PC-3 (cell line): ENCODE measurements at regions of chr12 and their contacts with region 1.

Region 1: DNA sequence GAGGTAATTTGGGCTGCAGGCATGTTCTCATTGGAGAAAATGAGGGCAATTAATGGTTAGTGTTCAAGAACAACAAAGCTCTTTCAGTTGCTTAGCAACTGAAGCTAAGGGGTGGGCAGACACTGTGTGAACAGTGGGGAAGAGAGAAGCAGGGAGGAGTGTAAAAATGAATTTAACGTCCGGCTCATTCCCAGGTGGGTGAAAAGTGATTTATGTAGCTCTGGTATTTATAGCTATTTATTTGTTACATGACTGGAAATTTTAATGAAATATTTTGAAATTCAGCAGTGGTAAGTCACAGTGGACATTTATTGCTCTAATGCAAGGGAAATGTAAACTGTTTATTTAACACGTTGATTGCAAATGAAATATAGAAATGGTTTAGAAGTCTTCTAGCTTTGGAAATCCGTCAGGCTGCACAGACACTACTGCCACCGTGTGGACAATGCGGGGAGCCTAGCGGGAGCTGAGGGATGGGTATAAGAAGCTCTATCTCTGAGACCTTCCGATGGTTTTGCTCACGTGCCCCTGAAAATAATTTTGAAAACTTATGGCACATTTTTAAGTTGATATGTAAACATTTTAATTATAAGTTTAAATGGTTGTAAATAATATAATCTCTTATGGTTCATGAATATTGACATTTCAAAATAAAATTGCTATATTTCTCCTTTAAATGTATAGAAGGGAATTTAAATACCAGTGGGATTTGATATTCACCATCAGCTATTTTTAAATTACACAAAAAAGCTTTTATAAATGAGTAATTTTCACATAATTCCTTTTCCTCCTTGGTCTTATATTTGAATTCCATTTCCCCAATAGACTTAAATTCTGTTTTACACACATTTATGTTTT is 54.4 kb downstream of the E2F7 start:
- DNase-seq: peak; percentile 78
- ATAC-seq: peak; percentile 90
- H3K4me3 ChIP-seq: no peak overlapping the region
- H3K27ac ChIP-seq: no peak overlapping the region
- H3K4me1 ChIP-seq: no peaks in the 10 kb centered on the region
- H3K27me3 ChIP-seq: no peaks in the 10 kb centered on the region
- CTCF ChIP-seq: peak; percentile 96

Region 2: DNA sequence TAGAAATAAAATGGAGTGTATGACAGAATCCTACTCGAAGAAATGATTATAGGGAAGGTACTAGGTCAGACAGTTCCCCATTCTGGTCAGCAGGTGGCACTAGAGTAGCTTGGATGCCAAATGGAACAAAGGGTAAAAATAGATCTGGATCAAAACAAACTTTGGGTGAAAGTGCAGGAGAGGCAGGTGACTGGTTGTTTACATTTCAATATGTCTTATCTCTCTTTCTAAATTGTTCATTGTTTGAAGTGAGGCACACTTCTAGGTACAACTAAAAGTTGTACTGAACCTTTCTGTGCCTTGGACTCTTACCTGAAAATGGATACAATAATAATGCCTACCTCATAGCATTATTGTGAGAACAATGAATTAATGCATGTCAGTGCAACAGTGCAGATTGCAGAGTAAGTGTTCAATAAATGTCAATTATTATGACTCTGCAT is 389.3 kb before region 1 on chr12:
- CTCF ChIA-PET with region 1: interaction called, 3 read pairs
- POLR2A ChIA-PET with region 1: no interaction called
- intact Hi-C with region 1: loop called (anchors 1 kb)
- DNase-seq: peak; percentile 85
- ATAC-seq: peak; percentile 52
- H3K4me3 ChIP-seq: no peak overlapping the region
- H3K27ac ChIP-seq: no peak overlapping the region
- H3K4me1 ChIP-seq: peaks cover 23% of the 10 kb centered on the region
- H3K27me3 ChIP-seq: no peaks in the 10 kb centered on the region
- CTCF ChIP-seq: peak; percentile 97

Region 3: DNA sequence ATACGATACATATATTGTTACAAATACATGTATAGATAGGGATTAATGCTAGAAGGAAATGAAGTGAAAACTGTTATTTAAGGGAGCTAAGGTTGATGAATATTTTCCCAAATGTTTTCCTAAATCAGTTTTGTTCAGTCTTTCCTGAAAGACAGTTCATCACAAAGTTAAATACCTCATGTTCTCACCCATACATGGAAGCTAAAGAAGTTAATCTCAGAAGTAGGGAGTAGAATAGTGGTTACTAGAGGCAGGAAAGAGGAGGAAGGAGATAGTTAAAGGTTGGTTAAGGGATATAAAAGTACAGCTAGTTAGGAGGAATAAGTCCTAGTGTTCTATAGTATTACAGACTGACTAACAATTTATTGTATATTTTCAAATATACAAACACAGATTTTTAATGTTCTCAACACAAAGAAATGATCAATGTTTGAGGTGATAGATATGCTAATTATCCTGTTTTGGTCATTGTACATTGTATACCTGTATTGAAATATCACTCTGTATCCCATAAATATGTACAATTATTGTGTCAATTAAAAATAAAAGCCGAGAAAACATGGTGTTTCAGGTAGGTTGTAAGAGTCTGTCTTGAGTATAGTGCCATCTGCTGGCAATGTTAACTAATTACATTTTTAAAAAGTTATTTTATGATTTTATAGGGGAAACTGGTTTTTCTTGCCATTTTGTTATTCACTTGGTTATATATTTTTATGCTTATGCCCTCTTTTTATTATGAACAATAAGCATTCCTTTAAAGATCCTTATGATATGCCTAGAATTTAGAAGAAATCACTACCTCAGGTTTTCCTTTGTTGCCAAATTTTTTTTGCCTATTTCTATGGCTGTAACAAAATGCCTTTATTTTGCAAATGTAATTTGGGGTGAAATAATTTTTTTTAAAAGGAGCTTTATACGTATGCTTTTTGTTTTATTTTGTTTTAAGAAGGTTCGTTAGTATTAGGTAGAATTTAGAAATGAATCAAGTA is 220.1 kb before region 1 on chr12:
- CTCF ChIA-PET with region 1: no interaction called
- POLR2A ChIA-PET with region 1: no interaction called
- intact Hi-C with region 1: loop called (anchors 5 kb)
- DNase-seq: peak; percentile 57
- ATAC-seq: peak; percentile 65
- H3K4me3 ChIP-seq: no peak overlapping the region
- H3K27ac ChIP-seq: no peak overlapping the region
- H3K4me1 ChIP-seq: peaks cover 5% of the 10 kb centered on the region; the same call in 1 of the 2 replicates
- H3K27me3 ChIP-seq: no peaks in the 10 kb centered on the region
- CTCF ChIP-seq: peak; percentile 74

Region 4: GRCh38 chr12:76820888-76821482 is 189.9 kb before region 1 on chr12:
- CTCF ChIA-PET with region 1: interaction called, 9 read pairs
- POLR2A ChIA-PET with region 1: no interaction called
- intact Hi-C with region 1: loop called (anchors 10 kb)
- DNase-seq: peak; percentile 58
- ATAC-seq: peak; percentile 70
- H3K4me3 ChIP-seq: no peak overlapping the region
- H3K27ac ChIP-seq: no peak overlapping the region
- H3K4me1 ChIP-seq: no peaks in the 10 kb centered on the region
- H3K27me3 ChIP-seq: no peaks in the 10 kb centered on the region
- CTCF ChIP-seq: peak; percentile 88

Region 5: DNA sequence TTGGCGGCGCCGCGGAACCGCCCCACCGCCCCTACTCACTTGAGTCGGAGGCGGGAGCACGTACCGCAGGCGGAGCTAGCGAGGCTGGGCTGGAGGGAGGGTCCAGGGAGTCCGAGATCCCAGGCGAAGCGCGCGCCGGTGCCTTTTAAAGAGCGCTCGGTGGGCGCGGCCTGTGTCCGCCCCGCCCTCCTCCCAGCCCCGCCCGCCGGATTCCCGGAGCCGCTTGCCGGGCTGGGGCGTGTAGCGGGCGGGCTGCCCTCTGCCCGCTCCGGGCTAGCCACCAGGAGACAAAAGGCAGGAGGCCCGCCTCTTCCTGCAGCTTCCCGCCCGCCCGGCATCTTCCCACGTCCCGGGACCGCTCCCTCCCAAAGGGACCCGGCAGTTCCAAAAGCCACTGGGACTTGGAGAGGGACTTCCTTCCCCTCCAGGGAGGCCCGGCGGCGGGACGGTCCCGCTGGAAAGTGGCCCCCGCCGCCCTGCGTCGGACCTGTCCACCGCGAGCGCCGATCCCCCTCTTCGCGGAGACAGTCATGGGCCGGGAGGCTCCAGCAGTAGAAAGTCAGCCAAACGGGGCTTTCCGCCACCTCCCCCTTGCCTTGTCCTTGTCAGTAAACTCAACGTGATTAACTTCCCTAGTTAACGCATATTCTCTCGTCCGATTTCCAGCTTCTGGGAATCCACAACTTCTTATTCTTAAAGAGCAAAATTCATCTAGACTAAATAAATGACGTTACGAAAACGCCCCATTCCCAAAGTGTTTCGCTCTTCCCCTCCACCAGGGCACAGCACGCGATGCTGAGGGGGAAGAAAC is 131.8 kb before region 1 on chr12 and contains the start of gene CSRP2:
- CTCF ChIA-PET with region 1: interaction called, 5 read pairs
- POLR2A ChIA-PET with region 1: no interaction called
- intact Hi-C with region 1: loop called (anchors 5 kb)
- DNase-seq: peak; percentile 92
- ATAC-seq: peak; percentile 84
- H3K4me3 ChIP-seq: peak within 1 kb of the TSS; percentile 75
- H3K27ac ChIP-seq: peak within 1 kb of the TSS; percentile 36
- H3K4me1 ChIP-seq: peaks cover 16% of the 10 kb centered on the region
- H3K27me3 ChIP-seq: no peaks in the 10 kb centered on the region
- CTCF ChIP-seq: no peak
- total RNA-seq, gene CSRP2: 33.1 and 36.3 TPM in 2 replicates

Region 6: DNA sequence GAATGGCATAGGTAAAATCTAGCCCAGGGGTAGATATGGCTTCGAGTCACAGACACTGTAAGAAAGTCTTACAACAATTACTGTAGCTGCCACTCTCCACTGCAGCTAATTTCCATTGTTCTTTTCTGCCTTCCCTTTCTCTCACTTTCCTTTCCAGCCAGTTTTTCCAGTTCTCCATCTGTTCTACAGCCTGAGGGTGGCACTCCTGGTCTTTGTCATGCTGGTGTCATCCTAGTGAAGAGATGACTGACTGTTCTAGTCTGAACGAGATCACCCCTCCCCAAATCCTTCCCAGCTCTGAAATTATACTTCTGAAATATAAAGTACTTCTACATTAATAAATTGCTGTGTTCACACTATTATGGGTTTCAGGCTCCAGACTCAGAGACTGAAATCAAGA is 57.9 kb before region 1 on chr12:
- CTCF ChIA-PET with region 1: interaction called, 7 read pairs
- POLR2A ChIA-PET with region 1: no interaction called
- intact Hi-C with region 1: loop called (anchors 1 kb)
- DNase-seq: peak; percentile 89
- ATAC-seq: peak; percentile 96
- H3K4me3 ChIP-seq: no peak overlapping the region
- H3K27ac ChIP-seq: no peak overlapping the region
- H3K4me1 ChIP-seq: peaks cover 12% of the 10 kb centered on the region; the same call in 1 of the 2 replicates
- H3K27me3 ChIP-seq: no peaks in the 10 kb centered on the region
- CTCF ChIP-seq: peak; percentile 77